WTC11 (cell line): ENCODE measurements at regions of chr2 and their contacts with region 1.

Region 1: GRCh38 chr2:230824406-230824978 is 40.2 kb upstream of the ITM2C start:
- DNase-seq: peak; percentile 59
- ATAC-seq: peak; percentile 89
- H3K4me3 Mint-ChIP-seq: no peak overlapping the region; the same call in 1 of the 2 replicates
- H3K27ac Mint-ChIP-seq: no peak overlapping the region
- H3K4me1 Mint-ChIP-seq: peaks cover 11% of the 10 kb centered on the region
- H3K27me3 Mint-ChIP-seq: peaks cover 5% of the 10 kb centered on the region; the same call in 1 of the 2 replicates
- CTCF ChIP-seq: peak; percentile 70

Region 2: GRCh38 chr2:230840301-230840700 is 15.8 kb after region 1 on chr2:
- CTCF ChIA-PET with region 1: interaction called, 20 read pairs
- POLR2A ChIA-PET with region 1: no interaction called
- DNase-seq: no peak
- ATAC-seq: no peak
- H3K4me3 Mint-ChIP-seq: no peak overlapping the region
- H3K27ac Mint-ChIP-seq: no peak overlapping the region
- H3K4me1 Mint-ChIP-seq: 0 out of 2 replicates have a peak, but pooled peaks cover 3% of the 10 kb centered on the region
- H3K27me3 Mint-ChIP-seq: peaks cover 4% of the 10 kb centered on the region; the same call in 1 of the 2 replicates
- CTCF ChIP-seq: no peak

Region 3: GRCh38 chr2:230866756-230867523 is 42.4 kb after region 1 on chr2:
- CTCF ChIA-PET with region 1: interaction called, 26 read pairs
- POLR2A ChIA-PET with region 1: no interaction called
- DNase-seq: no peak
- ATAC-seq: no peak
- H3K4me3 Mint-ChIP-seq: peak overlapping the region; percentile 88
- H3K27ac Mint-ChIP-seq: peak overlapping the region; percentile 96
- H3K4me1 Mint-ChIP-seq: peaks cover 76% of the 10 kb centered on the region
- H3K27me3 Mint-ChIP-seq: no peaks in the 10 kb centered on the region; the same call in 1 of the 2 replicates
- CTCF ChIP-seq: no peak